Esophagus muscularis mucosa (tissue), 4 donors: ENCODE measurements at regions of chr5 and their contacts with region 1.

Region 1: GRCh38 chr5:173887610-173888472 is at the start of gene CPEB4:
- DNase-seq: peak; percentile 100
- H3K4me3 ChIP-seq: peak within 1 kb of the TSS; percentile 66 to 92 (median 86)
- H3K27ac ChIP-seq: peak within 1 kb of the TSS; percentile 82 to 95 (median 88)
- H3K4me1 ChIP-seq: peaks cover 9 to 40% (median 32%) of the 10 kb centered on the region in 4 donors
- H3K27me3 ChIP-seq: no peaks in the 10 kb centered on the region
- CTCF ChIP-seq: no peak
- EP300 ChIP-seq: no peak
- POLR2A ChIP-seq: peak; percentile 97
- total RNA-seq, gene CPEB4: 44.9 to 96.4 (median 54.4) TPM

Region 2: GRCh38 chr5:173615884-173616576 is 271.8 kb before region 1 on chr5:
- intact Hi-C with region 1: loop called (anchors 5 kb)
- DNase-seq: peak; percentile 92
- H3K4me3 ChIP-seq: peak overlapping the region; percentile 76 to 99 (median 92)
- H3K27ac ChIP-seq: peak overlapping the region; percentile 94 to 98 (median 96)
- H3K4me1 ChIP-seq: peaks cover 22 to 54% (median 47%) of the 10 kb centered on the region in 4 donors
- H3K27me3 ChIP-seq: no peaks in the 10 kb centered on the region
- CTCF ChIP-seq: peak; percentile 59 to 72 (median 63)
- EP300 ChIP-seq: no peak
- POLR2A ChIP-seq: no peak

Region 3: GRCh38 chr5:173781814-173782670 is 105.8 kb before region 1 on chr5:
- intact Hi-C with region 1: loop called (anchors 10 kb)
- DNase-seq: peak; percentile 96
- H3K4me3 ChIP-seq: no peak overlapping the region
- H3K27ac ChIP-seq: peak overlapping the region; percentile 38 to 64 (median 58)
- H3K4me1 ChIP-seq: peaks cover 19 to 33% (median 22%) of the 10 kb centered on the region in 4 donors
- H3K27me3 ChIP-seq: no peaks in the 10 kb centered on the region
- CTCF ChIP-seq: no peak
- EP300 ChIP-seq: no peak
- POLR2A ChIP-seq: no peak

Region 4: DNA sequence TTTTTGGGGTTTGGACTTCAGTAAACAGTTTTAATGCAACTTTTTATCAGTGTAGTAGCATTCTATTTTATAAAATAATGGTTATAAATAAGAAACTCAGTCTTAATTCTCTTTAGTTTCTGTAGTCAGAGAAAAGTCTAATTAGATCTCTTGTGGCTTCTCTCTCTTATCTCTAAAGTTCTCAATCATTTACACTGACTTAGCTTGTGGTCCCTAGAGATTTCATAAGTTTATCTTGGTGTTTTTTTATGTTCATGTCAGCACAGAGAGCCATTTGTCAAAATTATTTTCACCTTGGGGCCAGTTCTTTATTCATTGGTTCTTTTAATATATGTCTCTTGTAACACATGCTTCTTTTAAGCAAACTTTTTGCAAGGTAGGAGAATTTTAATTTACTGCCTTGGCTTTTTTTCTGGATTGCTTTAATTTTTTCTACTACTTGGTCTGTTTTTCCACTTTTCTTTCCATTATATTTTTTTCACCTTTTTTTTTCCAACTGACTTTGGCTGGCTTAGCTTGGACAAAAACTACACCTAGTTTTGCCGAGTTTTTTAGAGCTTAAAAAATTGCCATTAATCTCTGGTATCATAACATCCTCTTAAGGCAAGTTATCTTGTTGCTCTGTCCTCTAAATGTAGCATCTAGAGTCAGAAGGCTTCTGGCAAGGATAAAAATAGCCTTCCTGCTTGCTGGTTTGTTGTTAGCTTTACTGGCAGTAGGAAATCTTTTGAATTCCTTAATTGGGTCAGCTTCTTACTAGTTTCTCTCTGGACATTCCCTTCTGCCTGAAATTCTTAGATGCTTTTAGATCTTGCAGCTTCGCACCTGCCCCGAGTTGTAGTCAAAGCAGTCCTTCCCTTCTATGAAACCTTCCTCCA is 35.6 kb after region 1 on chr5:
- intact Hi-C with region 1: loop called (anchors 1 kb)
- DNase-seq: no peak
- H3K4me3 ChIP-seq: peak overlapping the region in 1 of 4 donors; percentile 5
- H3K27ac ChIP-seq: peak overlapping the region; percentile 82 to 90 (median 87)
- H3K4me1 ChIP-seq: peaks cover 86 to 92% (median 89%) of the 10 kb centered on the region in 4 donors
- H3K27me3 ChIP-seq: no peaks in the 10 kb centered on the region
- CTCF ChIP-seq: no peak
- EP300 ChIP-seq: peak; percentile 70
- POLR2A ChIP-seq: no peak